ENCODE measurements at regions of chr7 and their contacts with region 1.

Region 1: DNA sequence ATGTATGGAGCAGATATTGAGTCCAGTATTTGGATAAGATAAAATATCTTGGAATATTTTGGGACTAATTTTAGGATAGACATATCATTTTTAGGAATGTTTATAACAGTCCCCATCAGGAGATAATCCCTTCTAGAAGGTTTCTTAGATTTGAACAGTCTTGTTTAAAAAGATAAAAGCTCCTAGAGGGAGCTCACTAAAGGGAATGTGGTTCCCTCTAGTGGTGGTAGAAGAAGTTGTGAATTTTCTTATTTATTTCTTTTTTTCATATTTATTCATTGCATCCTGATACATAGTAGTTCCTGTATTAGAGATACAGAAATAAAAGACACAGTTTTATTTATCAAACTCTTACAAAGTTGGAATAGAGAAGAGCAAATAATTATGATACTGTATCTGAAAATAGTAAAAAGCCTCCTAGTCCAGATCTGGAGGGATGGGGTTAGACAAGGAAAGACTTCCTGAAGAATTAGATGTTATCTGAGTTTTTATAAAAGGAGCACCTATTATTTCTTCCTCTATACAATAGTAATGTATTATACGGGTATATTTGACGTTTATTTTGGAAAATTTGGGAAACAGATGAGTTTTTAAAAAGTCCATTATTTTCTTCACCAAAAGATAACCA is 24.5 kb upstream of the KLF14 start:
- DNase-seq: peak; percentile 56
- H3K4me3 ChIP-seq: no peak overlapping the region
- H3K27ac ChIP-seq: no peak overlapping the region
- H3K4me1 ChIP-seq: no peaks in the 10 kb centered on the region
- H3K27me3 ChIP-seq: peaks cover 22% of the 10 kb centered on the region; the same call in 1 of the 2 replicates
- CTCF ChIP-seq: peak; percentile 98
- EP300 ChIP-seq: no peak
- RAD21 ChIP-seq: peak; percentile 87

Region 2: DNA sequence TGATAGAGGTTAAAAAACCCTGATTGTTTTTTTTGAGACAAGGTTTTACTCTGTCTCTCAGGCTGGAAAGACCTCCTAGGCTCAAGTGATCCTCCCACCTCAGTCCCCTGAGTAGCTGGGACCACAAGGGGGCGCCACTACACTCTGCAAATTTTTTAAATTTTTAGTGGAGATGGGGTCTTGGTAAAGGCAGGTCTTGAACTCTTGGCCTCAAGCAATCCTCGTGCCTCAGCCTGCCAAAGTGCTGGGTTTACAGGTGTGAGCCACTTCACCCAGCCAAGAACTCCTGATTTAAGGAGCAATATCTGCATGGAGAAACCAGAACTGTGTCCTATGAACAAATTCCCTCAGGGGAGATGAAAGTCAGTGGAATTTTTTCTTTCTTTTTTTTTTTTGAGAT is 695.5 kb before region 1 on chr7:
- CTCF ChIA-PET with region 1: interaction called, 11 read pairs
- POLR2A ChIA-PET with region 1: no interaction called
- DNase-seq: peak; percentile 70
- H3K4me3 ChIP-seq: no peak overlapping the region; a peak in 1 of 4 replicates
- H3K27ac ChIP-seq: no peak overlapping the region
- H3K4me1 ChIP-seq: no peaks in the 10 kb centered on the region
- H3K27me3 ChIP-seq: no peaks in the 10 kb centered on the region
- CTCF ChIP-seq: peak; percentile 94
- EP300 ChIP-seq: no peak
- RAD21 ChIP-seq: peak; percentile 68

Region 3: GRCh38 chr7:130741331-130741995 is 17.1 kb before region 1 on chr7:
- CTCF ChIA-PET with region 1: interaction called, 38 read pairs
- POLR2A ChIA-PET with region 1: no interaction called
- DNase-seq: no peak
- H3K4me3 ChIP-seq: no peak overlapping the region
- H3K27ac ChIP-seq: no peak overlapping the region
- H3K4me1 ChIP-seq: no peaks in the 10 kb centered on the region
- H3K27me3 ChIP-seq: peaks cover 80% of the 10 kb centered on the region
- CTCF ChIP-seq: no peak
- EP300 ChIP-seq: no peak
- RAD21 ChIP-seq: no peak

Region 4: DNA sequence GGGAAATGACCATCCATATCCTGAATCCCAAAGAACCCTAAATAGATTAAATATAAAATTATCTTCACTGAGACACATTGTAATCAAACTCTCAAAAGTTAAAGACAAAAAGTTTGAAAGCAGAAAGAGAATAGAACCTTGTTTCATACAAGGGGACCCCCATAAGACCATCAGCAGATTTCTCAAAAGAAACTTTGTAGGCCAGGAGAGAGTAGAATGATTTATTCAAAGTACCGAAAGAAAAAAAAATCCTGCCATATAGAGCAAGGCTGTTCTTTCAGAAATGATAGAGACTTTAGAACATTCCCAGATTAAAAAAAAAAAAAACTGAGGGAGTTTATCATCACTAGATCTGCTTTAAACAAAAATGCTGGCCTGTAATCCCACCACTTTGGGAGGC is 10.3 kb after region 1 on chr7:
- CTCF ChIA-PET with region 1: interaction called, 11 read pairs
- POLR2A ChIA-PET with region 1: no interaction called
- DNase-seq: no peak
- H3K4me3 ChIP-seq: no peak overlapping the region
- H3K27ac ChIP-seq: no peak overlapping the region
- H3K4me1 ChIP-seq: no peaks in the 10 kb centered on the region
- H3K27me3 ChIP-seq: no peaks in the 10 kb centered on the region
- CTCF ChIP-seq: no peak
- EP300 ChIP-seq: no peak
- RAD21 ChIP-seq: no peak

Region 5: DNA sequence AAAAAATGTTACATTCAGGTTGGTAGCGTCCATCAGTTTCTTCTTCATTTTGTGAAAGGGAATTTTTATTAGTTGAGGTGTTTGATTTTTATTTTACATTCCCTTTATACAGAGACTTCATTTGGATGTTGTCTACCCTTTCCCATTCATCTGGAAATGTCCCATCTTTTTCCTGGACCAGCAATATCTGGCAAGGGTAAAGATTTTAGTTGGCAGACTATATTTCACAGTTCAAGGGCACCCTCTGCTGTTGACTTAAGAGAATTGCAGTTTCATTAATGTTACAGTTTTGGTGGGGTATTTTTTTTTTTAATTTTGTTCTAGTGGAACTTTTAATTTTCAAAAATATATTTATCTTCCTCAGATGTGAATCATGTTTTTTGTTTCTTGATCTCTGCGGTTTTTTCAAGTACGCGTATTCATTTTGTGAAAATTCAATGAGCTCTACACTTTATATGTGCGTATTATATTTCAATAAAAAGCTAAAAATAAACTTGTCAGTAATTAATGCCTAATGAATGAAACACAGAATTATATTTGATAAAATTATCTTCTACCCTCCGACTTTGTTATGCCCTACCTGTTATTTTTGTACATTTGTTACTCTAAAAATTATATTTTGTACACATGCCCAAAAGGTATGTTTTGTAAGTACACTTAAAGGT is 73.4 kb after region 1 on chr7:
- CTCF ChIA-PET with region 1: interaction called, 11 read pairs
- POLR2A ChIA-PET with region 1: no interaction called
- DNase-seq: peak; percentile 74
- H3K4me3 ChIP-seq: no peak overlapping the region; a peak in 1 of 4 replicates
- H3K27ac ChIP-seq: no peak overlapping the region
- H3K4me1 ChIP-seq: no peaks in the 10 kb centered on the region
- H3K27me3 ChIP-seq: no peaks in the 10 kb centered on the region
- CTCF ChIP-seq: peak; percentile 97
- EP300 ChIP-seq: no peak
- RAD21 ChIP-seq: peak; percentile 95

Region 6: DNA sequence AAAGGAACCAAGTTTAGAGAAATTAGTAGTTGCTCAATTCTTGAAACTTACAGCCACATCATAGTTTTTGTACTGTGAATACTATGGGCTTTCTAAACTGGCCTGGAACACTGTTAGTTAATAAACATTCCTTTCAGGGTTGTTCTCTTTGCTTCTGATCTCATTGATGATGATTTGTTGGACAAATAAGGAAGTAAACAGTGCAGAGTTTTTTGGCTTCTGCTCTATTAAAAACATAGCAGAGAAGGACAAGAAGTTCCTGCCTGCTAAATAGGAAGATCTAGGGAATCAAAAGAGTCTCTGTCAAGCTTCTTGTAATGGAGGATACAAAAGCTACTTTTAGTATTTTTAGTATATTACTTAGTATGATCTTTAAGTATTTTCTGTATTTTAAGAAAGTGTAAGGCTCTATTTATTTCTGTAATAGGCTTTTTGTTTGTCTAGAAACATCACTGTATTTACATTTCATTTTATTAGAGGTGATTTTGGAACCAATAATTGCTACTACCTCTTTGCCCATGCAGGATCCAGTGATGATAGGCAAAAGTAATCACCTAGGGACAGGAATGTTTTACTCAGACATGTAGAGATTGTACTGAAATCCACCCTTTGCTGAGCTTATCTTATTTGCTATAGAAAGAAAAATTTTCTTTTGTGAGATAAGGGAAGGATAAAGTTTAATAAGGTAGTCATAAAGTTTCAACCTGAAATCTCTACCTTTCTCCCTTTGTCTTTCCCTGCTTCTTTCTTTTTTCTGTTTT is 642.5 kb after region 1 on chr7:
- CTCF ChIA-PET with region 1: no interaction called
- POLR2A ChIA-PET with region 1: no interaction called
- DNase-seq: no peak
- H3K4me3 ChIP-seq: no peak overlapping the region
- H3K27ac ChIP-seq: no peak overlapping the region
- H3K4me1 ChIP-seq: no peaks in the 10 kb centered on the region
- H3K27me3 ChIP-seq: no peaks in the 10 kb centered on the region
- CTCF ChIP-seq: no peak
- EP300 ChIP-seq: no peak
- RAD21 ChIP-seq: no peak